ENCODE measurements at regions of chr7 and their contacts with region 1.

Region 1: DNA sequence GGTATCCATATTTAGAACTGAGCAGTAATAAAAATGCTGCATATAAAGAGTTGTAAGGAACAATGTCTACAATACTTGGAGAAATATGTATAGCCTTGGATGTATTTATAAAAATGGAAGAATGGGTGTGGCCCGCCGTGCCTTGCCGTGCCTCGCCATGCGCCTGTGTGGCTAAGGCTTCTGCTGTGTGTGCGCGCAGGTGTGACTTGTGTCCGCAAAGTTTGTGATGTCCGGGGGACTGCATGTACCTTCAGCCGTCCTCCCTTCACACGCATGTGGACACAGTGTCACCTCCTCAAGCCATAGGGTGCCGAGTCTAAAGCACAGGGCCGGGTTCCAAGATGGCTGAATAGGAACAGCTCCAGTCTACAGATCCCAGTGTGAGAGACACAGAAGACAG is 9.8 kb downstream of the SAMD9 start:
- DNase-seq: no peak
- H3K4me3 ChIP-seq: no peak overlapping the region
- H3K27ac ChIP-seq: no peak overlapping the region
- H3K4me1 ChIP-seq: no peaks in the 10 kb centered on the region
- H3K27me3 ChIP-seq: no peaks in the 10 kb centered on the region
- CTCF ChIP-seq: no peak
- POLR2A ChIP-seq: no peak

Region 2: GRCh38 chr7:93046641-93047040 is 61.4 kb before region 1 on chr7:
- intact Hi-C with region 1: loop called (anchors 2 kb)
- DNase-seq: no peak
- H3K4me3 ChIP-seq: no peak overlapping the region
- H3K27ac ChIP-seq: no peak overlapping the region
- H3K4me1 ChIP-seq: no peaks in the 10 kb centered on the region
- H3K27me3 ChIP-seq: no peaks in the 10 kb centered on the region
- CTCF ChIP-seq: no peak
- POLR2A ChIP-seq: no peak

Measured in uterus (tissue), 4 donors.